Mammary epithelial cell (primary cell): ENCODE measurements at regions of chr2 and their contacts with region 1.

Region 1: DNA sequence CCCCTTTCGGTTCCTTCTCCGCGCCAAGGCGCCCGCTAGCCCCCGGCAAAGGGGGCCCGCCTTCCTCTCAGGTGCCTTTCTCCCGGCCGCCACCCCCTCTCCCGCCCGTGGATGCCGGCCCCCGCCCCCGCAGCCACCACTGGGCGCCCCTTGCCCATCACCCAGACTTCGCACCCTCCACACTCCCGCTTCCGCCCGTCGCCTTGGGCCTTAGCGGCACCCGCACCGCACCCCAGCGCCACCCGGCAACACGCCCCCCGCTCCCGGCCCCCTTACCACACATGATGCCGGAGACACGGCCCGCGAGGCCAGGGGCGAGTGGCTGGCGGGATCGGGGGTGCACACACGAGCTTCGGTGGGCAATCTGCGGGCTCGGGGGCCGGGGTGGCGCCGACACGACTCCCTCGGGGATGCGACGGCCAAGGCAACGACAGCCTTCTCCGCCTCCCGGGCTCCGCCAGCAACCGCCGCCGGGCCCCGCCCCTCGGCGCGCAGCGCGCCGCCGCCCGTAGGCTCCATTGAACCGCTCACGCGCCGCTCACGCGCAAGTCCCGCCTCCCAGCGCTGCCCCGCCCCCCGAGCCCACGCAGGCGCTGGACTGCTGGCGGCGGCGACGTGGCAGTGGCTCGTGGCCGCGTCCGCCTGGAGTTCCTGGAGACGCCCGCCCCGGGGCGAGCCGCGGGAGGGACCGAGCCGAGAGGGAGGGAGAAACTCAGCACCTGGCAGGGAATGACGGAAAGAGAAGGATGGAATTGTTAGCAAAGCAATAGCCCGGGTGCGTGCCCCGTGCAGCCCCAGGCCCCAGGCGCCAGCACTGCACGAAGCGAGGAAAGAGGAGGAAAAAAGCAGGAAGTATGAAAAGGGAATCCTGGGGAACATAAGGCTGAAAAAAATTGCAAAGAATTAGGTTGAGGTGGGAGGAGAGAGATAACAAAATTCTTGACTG is at the start of gene GFPT1:
- DNase-seq: peak; percentile 93
- H3K4me3 ChIP-seq: peak within 1 kb of the TSS; percentile 92 to 98 (median 98)
- H3K27ac ChIP-seq: peak within 1 kb of the TSS; percentile 74
- H3K4me1 ChIP-seq: peaks cover 11% of the 10 kb centered on the region
- H3K27me3 ChIP-seq: no peaks in the 10 kb centered on the region
- CTCF ChIP-seq: no peak
- total RNA-seq, gene GFPT1: 43.7 to 76.3 TPM

Region 2: DNA sequence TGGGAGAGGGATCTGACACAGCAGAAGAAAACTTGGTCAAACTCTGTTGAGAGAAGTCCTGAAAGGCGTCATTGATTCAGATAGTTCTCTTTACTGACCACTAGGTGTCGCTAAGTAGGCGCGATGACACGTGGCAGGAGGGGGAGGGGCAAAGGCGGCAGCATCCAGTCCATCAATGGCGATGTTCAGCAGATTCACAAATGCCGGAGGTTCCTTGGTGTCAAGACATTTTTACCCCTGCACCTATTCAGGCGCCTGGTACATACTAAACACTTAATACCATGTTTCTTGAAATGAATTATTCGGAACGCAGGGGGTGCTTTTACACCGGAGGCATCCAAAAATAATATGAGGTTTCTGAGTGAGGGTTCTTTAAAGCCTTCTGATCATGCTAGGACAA is 1025.0 kb before region 1 on chr2:
- CTCF ChIA-PET with region 1: no interaction called
- dilution Hi-C with region 1: no loop called
- in situ Hi-C with region 1: no loop called
- intact Hi-C with region 1: no loop called
- DNase-seq: peak; percentile 47
- H3K4me3 ChIP-seq: no peak overlapping the region
- H3K27ac ChIP-seq: no peak overlapping the region
- H3K4me1 ChIP-seq: no peaks in the 10 kb centered on the region
- H3K27me3 ChIP-seq: no peaks in the 10 kb centered on the region
- CTCF ChIP-seq: peak; percentile 84 to 85

Region 3: GRCh38 chr2:69436938-69437750 is 50.1 kb after region 1 on chr2 and contains the start of gene NFU1:
- CTCF ChIA-PET with region 1: no interaction called
- dilution Hi-C with region 1: no loop called
- in situ Hi-C with region 1: no loop called
- intact Hi-C with region 1: loop called (anchors 2 kb)
- DNase-seq: peak; percentile 85
- H3K4me3 ChIP-seq: peak within 1 kb of the TSS; percentile 61 to 89 (median 69)
- H3K27ac ChIP-seq: peak within 1 kb of the TSS; percentile 76
- H3K4me1 ChIP-seq: peaks cover 14% of the 10 kb centered on the region
- H3K27me3 ChIP-seq: no peaks in the 10 kb centered on the region
- CTCF ChIP-seq: peak; percentile 31 to 65
- total RNA-seq, gene NFU1: 23.0 to 39.3 TPM

Region 4: DNA sequence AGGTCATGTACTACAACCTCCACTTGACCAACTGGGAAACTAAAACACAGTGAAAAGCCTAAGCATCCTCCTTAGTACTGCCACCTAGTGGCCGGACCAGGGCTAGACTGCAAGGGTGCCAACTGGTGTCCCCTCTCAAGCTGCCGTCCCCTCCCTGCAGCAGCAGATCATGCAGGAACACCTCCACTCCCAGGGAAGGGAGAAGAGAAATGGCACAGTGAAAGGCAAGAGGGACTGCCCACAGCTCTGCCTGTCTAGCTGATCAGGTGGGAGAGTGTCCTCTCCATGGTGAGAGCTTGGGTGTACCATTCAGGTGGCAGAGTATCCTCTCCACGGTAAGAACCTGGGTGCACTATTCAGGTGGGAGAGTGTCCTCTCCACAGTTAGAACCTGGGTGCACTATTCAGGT is 178.4 kb after region 1 on chr2:
- CTCF ChIA-PET with region 1: no interaction called
- dilution Hi-C with region 1: loop called (anchors 10 kb)
- in situ Hi-C with region 1: no loop called
- intact Hi-C with region 1: no loop called
- DNase-seq: no peak
- H3K4me3 ChIP-seq: no peak overlapping the region
- H3K27ac ChIP-seq: no peak overlapping the region
- H3K4me1 ChIP-seq: peaks cover 27% of the 10 kb centered on the region
- H3K27me3 ChIP-seq: no peaks in the 10 kb centered on the region
- CTCF ChIP-seq: peak; percentile 67 to 84